ENCODE measurements at regions of chr7 and their contacts with region 1.

Region 1: DNA sequence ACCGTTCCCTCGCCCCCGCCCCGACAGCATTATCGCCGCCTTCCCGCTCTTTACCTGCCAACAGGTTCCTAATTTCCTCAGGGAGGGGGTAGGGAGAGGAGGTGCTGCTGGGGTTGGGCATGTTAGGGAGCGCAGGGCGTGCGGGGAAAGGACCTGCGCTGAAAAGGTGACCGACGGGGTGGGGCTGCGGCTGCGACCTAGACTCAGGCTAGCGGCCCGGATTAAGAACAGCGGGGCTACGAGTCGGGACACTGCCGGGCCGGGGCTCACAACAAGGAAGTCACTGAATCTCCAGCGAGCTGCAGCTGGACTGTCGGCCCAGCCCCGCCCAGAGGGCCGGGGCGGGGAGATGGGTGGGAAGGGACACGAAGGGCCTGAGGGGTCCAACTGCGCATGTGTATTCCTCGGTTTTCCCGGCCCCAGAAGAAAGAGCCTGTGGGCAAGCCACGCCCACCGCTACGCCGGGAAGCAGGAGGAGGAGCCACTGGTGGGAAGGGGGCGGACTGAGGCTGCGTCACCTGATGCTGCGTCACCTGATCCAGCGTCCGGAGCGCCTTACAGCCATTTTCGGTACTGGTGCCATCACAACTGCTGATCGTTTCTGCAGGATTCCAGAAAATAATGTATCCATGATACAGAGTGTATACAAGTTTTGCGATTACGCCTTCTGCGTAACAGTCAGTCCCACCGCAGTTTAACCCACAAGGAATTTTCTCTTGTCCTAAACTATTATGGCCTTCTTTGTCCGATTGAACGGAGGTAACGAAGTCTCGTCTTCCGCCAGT is at the start of gene SKAP2:
- DNase-seq: peak; percentile 99
- H3K4me3 Mint-ChIP-seq: peak within 1 kb of the TSS; percentile 97
- H3K27ac Mint-ChIP-seq: peak within 1 kb of the TSS; percentile 96
- H3K4me1 Mint-ChIP-seq: peaks cover 31% of the 10 kb centered on the region
- H3K27me3 Mint-ChIP-seq: no peaks in the 10 kb centered on the region
- CTCF ChIP-seq: no peak
- total RNA-seq, gene SKAP2: 24.8 and 27.5 TPM in 2 replicates

Region 2: GRCh38 chr7:26853788-26854393 is 10.6 kb before region 1 on chr7:
- CTCF ChIA-PET with region 1: interaction called, 9 read pairs
- POLR2A ChIA-PET with region 1: interaction called, 25 read pairs
- intact Hi-C with region 1: no loop called
- DNase-seq: peak; percentile 78
- H3K4me3 Mint-ChIP-seq: peak overlapping the region; percentile 17
- H3K27ac Mint-ChIP-seq: peak overlapping the region; percentile 96
- H3K4me1 Mint-ChIP-seq: peaks cover 33% of the 10 kb centered on the region
- H3K27me3 Mint-ChIP-seq: no peaks in the 10 kb centered on the region
- CTCF ChIP-seq: peak; percentile 52

Region 3: DNA sequence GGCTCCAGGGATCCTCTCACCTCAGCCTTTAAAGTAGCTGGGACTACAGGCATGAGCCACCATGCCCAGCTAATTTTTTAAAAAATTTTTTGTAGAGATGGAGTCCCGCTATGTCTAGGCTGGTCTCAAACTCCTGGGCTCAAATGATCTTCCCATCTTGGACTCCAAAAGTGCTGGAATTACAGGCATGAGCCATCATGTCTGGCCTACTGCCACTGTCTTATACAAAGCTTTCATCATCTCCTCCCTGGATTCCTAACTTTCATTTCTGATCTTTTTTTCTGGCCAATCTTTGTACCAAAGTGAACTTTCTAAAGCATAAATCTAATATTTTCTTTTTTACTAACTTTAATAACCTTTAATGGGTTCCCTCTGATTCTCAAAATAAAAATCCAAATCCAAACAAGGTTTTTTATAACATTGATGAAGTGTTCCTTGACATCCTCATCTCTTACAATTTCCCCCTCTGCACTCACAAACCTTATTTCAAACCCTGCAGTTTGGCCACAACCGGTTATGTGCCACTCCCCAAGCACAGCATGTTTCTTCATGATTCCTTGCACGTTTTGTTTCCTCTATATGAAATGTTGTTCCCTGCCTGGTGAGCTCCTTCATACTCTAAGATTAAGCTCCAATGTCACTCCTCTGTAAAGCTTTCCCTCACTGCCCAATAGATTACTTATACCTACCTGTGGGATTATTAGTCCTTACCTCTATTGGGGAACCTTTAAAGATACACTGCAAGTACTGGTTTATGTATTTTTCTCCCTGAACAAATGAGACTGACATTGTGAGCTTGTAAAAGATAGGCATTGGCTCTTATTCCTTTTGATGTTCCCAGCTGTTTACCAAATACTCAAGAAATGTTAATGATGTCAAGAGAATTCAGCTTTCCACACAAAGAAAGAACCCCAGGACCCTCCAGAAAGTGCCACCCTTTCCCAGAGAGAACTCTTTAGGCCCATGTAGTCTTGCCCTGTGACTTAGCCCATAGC is 129.6 kb after region 1 on chr7:
- CTCF ChIA-PET with region 1: no interaction called
- POLR2A ChIA-PET with region 1: interaction called, 12 read pairs
- intact Hi-C with region 1: no loop called
- DNase-seq: peak; percentile 36
- H3K4me3 Mint-ChIP-seq: peak overlapping the region; percentile 22
- H3K27ac Mint-ChIP-seq: peak overlapping the region; percentile 87
- H3K4me1 Mint-ChIP-seq: peaks cover 31% of the 10 kb centered on the region
- H3K27me3 Mint-ChIP-seq: no peaks in the 10 kb centered on the region
- CTCF ChIP-seq: no peak

Region 4: GRCh38 chr7:27112955-27113949 is 248.8 kb after region 1 on chr7:
- CTCF ChIA-PET with region 1: interaction called, 24 read pairs
- POLR2A ChIA-PET with region 1: interaction called, 395 read pairs
- intact Hi-C with region 1: no loop called
- DNase-seq: peak; percentile 93
- H3K4me3 Mint-ChIP-seq: peak overlapping the region; percentile 80
- H3K27ac Mint-ChIP-seq: peak overlapping the region; percentile 90
- H3K4me1 Mint-ChIP-seq: peaks cover 25% of the 10 kb centered on the region
- H3K27me3 Mint-ChIP-seq: no peaks in the 10 kb centered on the region
- CTCF ChIP-seq: no peak

Region 5: GRCh38 chr7:27130540-27131389 is 266.3 kb after region 1 on chr7 and contains the start of gene HOXA4:
- CTCF ChIA-PET with region 1: interaction called, 3 read pairs
- POLR2A ChIA-PET with region 1: interaction called, 28 read pairs
- intact Hi-C with region 1: no loop called
- DNase-seq: peak; percentile 93
- H3K4me3 Mint-ChIP-seq: peak within 1 kb of the TSS; percentile 80
- H3K27ac Mint-ChIP-seq: peak within 1 kb of the TSS; percentile 51
- H3K4me1 Mint-ChIP-seq: peaks cover 32% of the 10 kb centered on the region
- H3K27me3 Mint-ChIP-seq: no peaks in the 10 kb centered on the region
- CTCF ChIP-seq: no peak
- total RNA-seq, gene HOXA4: 2.6 and 3.7 TPM in 2 replicates

Measured in MCF 10A (cell line).